Activated CD4-positive, alpha-beta memory T cell treated with anti-CD3 and anti-CD28 coated beads, Interleukin-2, amount 10 ng/mL, durations not matched to agents 7 days and 5 days (primary cell): ENCODE measurements at regions of chr15 and their contacts with region 1.

Region 1: DNA sequence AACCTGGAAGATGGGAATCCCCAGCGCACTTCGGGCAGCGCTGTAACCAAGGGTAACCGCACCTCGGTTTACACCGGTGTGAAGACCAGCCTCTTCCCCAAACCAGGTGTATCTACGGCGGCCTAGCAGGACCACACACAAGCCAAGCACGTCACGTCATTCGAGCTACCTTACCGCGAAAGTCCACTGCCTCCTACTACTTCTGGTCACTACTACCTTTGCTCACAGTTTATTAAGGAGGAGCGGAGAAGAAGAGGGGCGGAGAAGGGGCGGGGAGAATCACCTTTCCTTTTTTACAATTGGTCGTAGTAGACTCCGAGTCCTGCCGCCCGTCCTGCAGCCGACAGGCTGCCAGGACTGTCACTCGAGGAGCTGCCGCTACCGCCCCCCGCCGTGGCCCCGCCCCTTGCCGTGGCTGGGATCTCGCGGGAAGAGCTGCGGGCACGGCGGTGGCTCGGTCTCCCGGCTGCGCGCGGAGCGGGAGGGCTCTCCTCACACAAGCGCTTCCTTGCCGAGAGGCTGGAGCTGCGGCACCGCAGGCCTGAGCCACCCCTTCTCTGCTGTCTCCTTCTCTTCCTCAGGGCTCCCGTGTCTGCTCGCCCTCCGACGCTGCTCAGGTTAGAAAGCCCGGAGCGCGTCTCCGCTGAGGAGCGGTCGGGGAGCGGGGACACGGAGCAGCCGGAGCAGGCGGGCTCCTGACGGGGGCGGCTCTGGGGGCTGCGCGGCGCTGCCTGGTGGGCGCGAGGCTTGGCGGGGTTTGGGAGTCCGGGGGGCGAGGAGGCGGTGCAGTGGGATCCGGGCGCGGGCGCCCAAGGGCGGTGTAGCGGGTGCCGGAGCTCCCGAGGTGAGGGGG is at the start of gene GLCE:
- DNase-seq: peak; percentile 93
- H3K4me3 Mint-ChIP-seq: peak within 1 kb of the TSS; percentile 84
- H3K27ac Mint-ChIP-seq: peak within 1 kb of the TSS; percentile 42
- H3K4me1 Mint-ChIP-seq: peaks cover 16% of the 10 kb centered on the region
- H3K27me3 Mint-ChIP-seq: peaks cover 30% of the 10 kb centered on the region
- total RNA-seq, gene GLCE: 3.8 to 4.0 TPM

Region 2: GRCh38 chr15:69104050-69104750 is 56.2 kb before region 1 on chr15:
- CTCF ChIA-PET with region 1: no interaction called
- POLR2A ChIA-PET with region 1: interaction called, 10 read pairs
- DNase-seq: no peak
- H3K4me3 Mint-ChIP-seq: no peak overlapping the region
- H3K27ac Mint-ChIP-seq: no peak overlapping the region
- H3K4me1 Mint-ChIP-seq: peaks cover 39% of the 10 kb centered on the region
- H3K27me3 Mint-ChIP-seq: peaks cover 10% of the 10 kb centered on the region

Region 3: DNA sequence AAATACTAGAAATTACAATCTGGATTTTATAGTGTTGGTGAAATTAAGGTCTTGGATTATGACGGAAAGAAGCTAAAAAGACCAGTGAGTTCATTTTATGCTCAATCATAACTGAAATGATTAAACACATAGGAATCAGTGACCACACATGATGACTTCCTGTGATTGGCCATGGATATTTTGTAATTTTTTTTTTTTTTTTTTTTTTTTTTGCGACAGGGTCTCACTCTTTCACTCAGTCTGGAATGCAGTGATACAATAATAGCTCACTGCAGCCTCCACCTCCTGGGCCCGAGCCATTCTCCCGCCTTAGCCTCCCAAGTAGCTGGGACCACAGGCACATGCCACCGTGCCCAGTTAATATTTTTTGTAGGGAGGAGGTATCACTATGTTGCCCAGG is 185.7 kb after region 1 on chr15:
- CTCF ChIA-PET with region 1: no interaction called
- POLR2A ChIA-PET with region 1: no interaction called
- DNase-seq: no peak
- H3K4me3 Mint-ChIP-seq: no peak overlapping the region
- H3K27ac Mint-ChIP-seq: no peak overlapping the region
- H3K4me1 Mint-ChIP-seq: no peaks in the 10 kb centered on the region
- H3K27me3 Mint-ChIP-seq: peaks cover 9% of the 10 kb centered on the region